Mammary epithelial cell (primary cell): ENCODE measurements at regions of chr14 and their contacts with region 1.

Region 1: DNA sequence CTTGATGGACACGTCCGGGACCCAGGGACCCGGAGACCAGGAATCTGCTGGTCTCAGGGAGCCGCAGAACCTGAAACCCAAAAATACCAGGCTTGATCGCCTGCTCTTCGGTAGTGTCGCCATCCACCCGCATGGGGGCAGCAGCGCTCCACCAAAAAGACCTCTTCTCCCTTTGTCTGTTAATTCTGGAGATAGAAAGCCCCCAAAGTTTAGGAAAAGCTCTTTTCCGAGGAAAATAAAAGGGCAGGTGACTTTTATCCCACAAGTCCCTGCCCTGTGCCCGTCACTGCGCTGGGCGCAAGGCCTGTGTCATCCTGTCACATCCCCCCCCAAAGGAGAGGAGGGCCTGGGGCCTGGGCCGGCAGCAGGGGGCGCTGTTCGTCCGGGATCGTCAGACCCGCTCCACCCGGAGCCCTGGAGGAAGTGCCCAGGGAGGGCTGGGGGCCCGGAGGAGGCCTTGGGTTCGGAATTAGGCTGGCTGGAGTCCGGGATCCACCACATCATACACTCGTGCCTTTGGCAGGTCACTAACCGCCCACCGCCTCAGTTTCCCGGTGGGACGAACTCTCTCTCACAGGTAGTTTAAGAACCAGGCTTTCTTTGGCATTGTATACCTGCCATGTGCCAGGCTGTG is 31.9 kb downstream of the DAD1 start:
- DNase-seq: peak; percentile 67
- H3K4me3 ChIP-seq: peak overlapping the region in 2 of 3 experiments; percentile 27 to 41
- H3K27ac ChIP-seq: peak overlapping the region; percentile 48
- H3K4me1 ChIP-seq: peaks cover 28% of the 10 kb centered on the region
- H3K27me3 ChIP-seq: no peaks in the 10 kb centered on the region
- CTCF ChIP-seq: peak; percentile 85

Region 2: DNA sequence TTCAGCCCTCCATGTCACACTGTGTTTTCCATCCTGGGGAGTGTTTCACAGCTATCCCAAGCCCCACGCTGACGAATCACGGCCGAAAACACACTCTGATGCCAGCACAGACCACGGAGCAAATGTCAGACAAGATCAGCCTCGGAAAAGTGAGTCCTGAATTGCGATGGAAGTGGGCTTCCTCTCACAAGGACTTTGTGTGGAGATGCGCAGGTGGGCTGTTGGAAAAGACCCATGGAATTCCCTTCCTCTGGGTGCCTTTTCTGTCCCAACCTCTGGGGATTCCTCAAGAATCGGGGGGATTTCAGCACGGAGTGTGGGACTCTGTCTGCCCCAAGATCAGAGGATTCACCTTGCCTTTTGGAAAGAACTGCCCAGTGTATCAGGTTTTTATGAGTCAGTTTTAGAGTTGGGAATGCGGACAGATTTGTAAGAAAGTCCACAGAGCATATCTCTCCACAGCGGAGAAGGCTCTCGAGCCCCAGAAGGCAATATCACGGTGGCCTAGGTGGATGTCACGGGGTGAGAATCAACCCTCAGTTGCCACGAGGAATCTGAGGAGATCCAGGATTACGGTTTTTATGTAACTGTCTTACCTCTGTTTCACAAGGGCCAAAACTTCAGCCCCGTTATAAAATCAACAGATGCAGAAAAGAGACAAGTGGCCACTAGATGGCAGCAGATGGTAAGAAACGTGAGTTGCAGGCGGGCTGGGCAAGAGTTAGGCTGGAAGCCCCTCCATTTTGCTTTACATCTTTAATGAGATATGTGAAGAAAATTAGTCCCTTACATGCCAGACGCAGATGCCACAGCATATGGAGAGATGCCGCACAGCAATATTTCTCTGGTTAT is 170.0 kb before region 1 on chr14:
- CTCF ChIA-PET with region 1: interaction called, 9 read pairs
- dilution Hi-C with region 1: no loop called
- in situ Hi-C with region 1: loop called (anchors 10 to 25 kb)
- intact Hi-C with region 1: loop called (anchors 1 kb)
- DNase-seq: peak; percentile 39
- H3K4me3 ChIP-seq: no peak overlapping the region
- H3K27ac ChIP-seq: no peak overlapping the region
- H3K4me1 ChIP-seq: peaks cover 16% of the 10 kb centered on the region
- H3K27me3 ChIP-seq: peaks cover 4% of the 10 kb centered on the region
- CTCF ChIP-seq: peak; percentile 48 to 77

Region 3: DNA sequence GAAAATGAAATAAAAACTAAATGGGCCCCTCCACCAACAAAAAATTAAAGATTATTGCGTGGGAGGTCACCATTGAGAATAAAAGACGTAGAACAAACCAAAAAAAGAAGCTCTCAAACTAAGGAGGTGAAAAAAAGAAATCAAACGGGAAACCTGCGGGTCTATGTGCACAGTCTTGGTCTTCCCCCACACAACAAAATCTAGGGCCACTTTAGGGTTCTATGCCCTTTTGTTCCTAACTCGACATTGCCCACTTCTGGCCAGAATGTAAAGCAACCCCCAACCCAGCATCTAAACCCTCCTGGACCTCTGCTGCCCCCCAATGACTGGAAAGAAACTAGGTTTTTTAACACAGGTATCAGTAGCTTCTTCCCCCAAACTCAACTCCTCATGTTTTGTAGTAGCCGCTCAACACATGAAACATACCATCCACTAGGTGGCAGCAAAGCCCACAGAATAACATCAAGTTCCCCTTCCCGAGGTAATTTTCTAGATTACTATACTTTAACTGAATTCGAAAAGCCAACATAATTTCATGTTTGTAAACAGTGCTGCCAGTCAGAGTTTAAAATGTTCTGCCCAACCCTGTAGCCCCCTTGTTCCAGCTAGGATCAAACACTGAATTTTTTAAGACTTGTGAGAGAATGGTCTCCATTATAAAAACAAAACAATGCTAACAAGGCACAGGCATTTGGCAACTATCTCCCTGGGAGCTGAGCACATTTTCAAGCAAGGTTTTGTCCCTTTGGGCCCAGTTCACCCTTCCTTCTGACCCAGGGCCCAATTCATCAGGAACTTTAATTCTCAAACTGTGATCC is 13.2 kb after region 1 on chr14:
- CTCF ChIA-PET with region 1: no interaction called
- dilution Hi-C with region 1: no loop called
- in situ Hi-C with region 1: no loop called
- intact Hi-C with region 1: loop called (anchors 2 kb)
- DNase-seq: peak; percentile 66
- H3K4me3 ChIP-seq: no peak overlapping the region
- H3K27ac ChIP-seq: peak overlapping the region; percentile 46
- H3K4me1 ChIP-seq: peaks cover 10% of the 10 kb centered on the region
- H3K27me3 ChIP-seq: no peaks in the 10 kb centered on the region
- CTCF ChIP-seq: peak; percentile 52 to 67

Region 4: GRCh38 chr14:22622255-22622654 is 65.1 kb after region 1 on chr14:
- CTCF ChIA-PET with region 1: no interaction called
- dilution Hi-C with region 1: no loop called
- in situ Hi-C with region 1: no loop called
- intact Hi-C with region 1: no loop called
- DNase-seq: peak; percentile 39
- H3K4me3 ChIP-seq: no peak overlapping the region
- H3K27ac ChIP-seq: no peak overlapping the region
- H3K4me1 ChIP-seq: no peaks in the 10 kb centered on the region
- H3K27me3 ChIP-seq: no peaks in the 10 kb centered on the region
- CTCF ChIP-seq: no peak

Region 5: GRCh38 chr14:22668417-22668816 is 111.3 kb after region 1 on chr14:
- CTCF ChIA-PET with region 1: no interaction called
- dilution Hi-C with region 1: loop called (anchors 5 kb)
- in situ Hi-C with region 1: no loop called
- intact Hi-C with region 1: no loop called
- DNase-seq: no peak
- H3K4me3 ChIP-seq: no peak overlapping the region
- H3K27ac ChIP-seq: no peak overlapping the region
- H3K4me1 ChIP-seq: no peaks in the 10 kb centered on the region
- H3K27me3 ChIP-seq: no peaks in the 10 kb centered on the region
- CTCF ChIP-seq: no peak

Region 6: GRCh38 chr14:22802860-22803686 is 246.0 kb after region 1 on chr14:
- CTCF ChIA-PET with region 1: no interaction called
- dilution Hi-C with region 1: no loop called
- in situ Hi-C with region 1: no loop called
- intact Hi-C with region 1: no loop called
- DNase-seq: no peak
- H3K4me3 ChIP-seq: no peak overlapping the region
- H3K27ac ChIP-seq: no peak overlapping the region
- H3K4me1 ChIP-seq: peaks cover 10% of the 10 kb centered on the region
- H3K27me3 ChIP-seq: peaks cover 2% of the 10 kb centered on the region
- CTCF ChIP-seq: no peak

Region 7: DNA sequence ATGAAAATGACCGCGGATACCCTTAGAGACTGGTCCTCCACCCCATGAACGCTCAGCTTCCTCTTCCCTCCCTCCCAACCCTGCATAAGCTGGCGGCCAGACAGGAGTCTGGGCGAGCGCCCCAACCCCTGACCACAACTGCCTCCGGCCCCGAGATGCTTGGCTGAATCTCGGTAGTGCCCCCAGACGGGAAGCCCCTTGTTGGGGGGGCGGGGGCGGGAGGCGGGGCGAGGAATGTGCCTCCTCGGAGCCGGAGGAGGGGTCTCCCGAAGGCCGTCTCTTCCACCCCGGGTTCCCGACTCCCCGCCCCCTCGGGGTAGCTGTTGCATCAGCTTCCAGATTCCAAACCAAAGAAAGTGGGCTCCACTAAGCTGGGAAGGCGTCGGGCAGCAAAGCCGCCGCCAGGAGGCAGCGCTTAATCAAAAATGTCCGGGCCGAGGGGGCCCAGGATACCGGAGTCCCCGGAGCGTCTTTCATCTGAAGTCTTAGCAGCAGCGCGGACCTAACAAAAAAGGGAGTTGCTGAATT is 265.5 kb after region 1 on chr14:
- CTCF ChIA-PET with region 1: interaction called, 6 read pairs
- dilution Hi-C with region 1: no loop called
- in situ Hi-C with region 1: loop called in 1 of 2 experiments (anchors 25 kb)
- intact Hi-C with region 1: loop called (anchors 2 kb)
- DNase-seq: peak; percentile 63
- H3K4me3 ChIP-seq: peak overlapping the region; percentile 9 to 15 (median 11)
- H3K27ac ChIP-seq: peak overlapping the region; percentile 50
- H3K4me1 ChIP-seq: peaks cover 45% of the 10 kb centered on the region
- H3K27me3 ChIP-seq: no peaks in the 10 kb centered on the region
- CTCF ChIP-seq: peak; percentile 74 to 85

Region 8: DNA sequence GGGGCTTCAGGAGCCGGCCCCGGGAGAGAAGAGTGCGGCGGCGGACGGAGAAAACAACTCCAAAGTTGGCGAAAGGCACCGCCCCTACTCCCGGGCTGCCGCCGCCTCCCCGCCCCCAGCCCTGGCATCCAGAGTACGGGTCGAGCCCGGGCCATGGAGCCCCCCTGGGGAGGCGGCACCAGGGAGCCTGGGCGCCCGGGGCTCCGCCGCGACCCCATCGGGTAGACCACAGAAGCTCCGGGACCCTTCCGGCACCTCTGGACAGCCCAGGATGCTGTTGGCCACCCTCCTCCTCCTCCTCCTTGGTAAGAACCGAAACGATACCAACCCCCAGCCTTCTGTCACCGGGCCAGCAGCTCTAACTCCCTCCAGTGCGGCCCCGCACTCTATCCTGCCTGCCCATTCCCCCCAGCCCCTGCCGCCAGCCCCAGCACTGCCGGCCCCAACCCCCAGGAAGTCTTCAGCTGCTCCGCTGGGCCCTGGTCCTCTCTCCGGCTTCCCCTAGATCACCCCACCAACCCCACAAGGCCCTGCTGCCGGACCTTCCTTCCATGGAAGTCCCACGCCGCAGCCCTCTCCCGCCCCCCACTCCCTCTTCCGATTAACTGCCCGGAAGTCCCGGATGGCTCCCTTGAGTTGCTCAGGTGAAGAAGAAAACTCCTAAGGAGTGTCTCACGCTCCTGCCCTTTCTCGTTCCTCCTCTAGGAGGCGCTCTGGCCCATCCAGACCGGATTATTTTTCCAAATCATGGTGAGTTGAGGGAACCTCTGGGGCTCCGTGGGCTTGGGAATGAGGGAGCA is 315.1 kb after region 1 on chr14:
- CTCF ChIA-PET with region 1: no interaction called
- dilution Hi-C with region 1: no loop called
- in situ Hi-C with region 1: loop called in 1 of 2 experiments (anchors 25 kb)
- intact Hi-C with region 1: loop called (anchors 5 kb)
- DNase-seq: peak; percentile 85
- H3K4me3 ChIP-seq: peak overlapping the region; percentile 85 to 90 (median 87)
- H3K27ac ChIP-seq: peak overlapping the region; percentile 85
- H3K4me1 ChIP-seq: peaks cover 12% of the 10 kb centered on the region
- H3K27me3 ChIP-seq: no peaks in the 10 kb centered on the region
- CTCF ChIP-seq: peak; percentile 98